ENCODE measurements at regions of chr12 and their contacts with region 1.

Region 1: DNA sequence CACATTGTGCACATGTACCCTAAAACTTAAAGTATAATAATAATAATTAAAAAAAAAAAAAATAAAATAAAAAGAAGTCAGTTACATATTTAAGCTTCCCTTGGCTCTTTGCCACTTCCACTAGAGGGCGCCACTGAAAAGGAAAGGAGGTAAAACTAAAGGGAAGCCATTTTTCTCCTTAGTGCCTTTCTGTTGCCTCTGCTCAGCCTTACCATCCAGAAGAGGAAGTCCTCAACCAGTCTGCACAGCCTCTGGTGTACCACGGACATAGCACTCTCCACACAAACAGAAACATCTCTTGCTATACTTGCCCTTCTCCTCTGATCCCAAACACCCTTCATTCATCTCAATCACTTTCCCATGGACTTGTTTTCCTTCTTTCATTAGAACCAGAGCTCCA is 169.0 kb upstream of the EEA1 start:
- DNase-seq: peak; percentile 82
- ATAC-seq: peak; percentile 84
- H3K4me3 Mint-ChIP-seq: no peak overlapping the region
- H3K27ac Mint-ChIP-seq: peak overlapping the region; percentile 31
- H3K4me1 Mint-ChIP-seq: peaks cover 17% of the 10 kb centered on the region
- H3K27me3 Mint-ChIP-seq: no peaks in the 10 kb centered on the region

Region 2: DNA sequence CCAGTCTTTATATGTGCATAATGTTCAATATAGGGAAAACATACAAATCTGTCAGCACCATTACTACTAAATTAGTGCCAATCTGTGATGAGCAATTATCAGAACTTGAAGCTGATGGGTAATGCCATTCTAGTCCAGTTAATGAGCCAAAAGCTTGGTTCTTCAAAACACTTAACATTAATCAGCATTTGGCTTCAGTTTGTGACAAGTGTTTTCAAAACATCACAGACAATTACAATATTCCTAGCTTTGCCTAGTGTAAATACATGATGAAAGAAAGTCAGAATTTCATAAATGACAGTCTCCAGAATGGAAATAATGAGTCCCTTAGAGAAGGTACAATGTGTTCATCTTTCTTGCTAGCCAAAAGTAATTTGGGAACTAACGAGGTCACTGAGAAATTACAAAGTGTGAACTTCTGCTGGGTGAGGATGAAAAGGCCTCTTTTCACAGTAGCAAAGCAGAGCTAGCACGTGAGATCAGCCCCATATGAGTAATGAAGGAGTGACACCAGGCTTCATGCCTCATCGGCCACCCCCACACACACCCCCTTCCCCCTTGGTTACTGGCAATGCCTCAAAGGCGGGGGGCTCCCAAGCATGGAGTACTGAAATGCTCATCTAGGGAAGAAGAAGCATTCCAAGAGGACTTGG is 11.6 kb after region 1 on chr12:
- CTCF ChIA-PET with region 1: interaction called, 14 read pairs
- POLR2A ChIA-PET with region 1: no interaction called
- DNase-seq: no peak
- ATAC-seq: no peak
- H3K4me3 Mint-ChIP-seq: no peak overlapping the region
- H3K27ac Mint-ChIP-seq: no peak overlapping the region
- H3K4me1 Mint-ChIP-seq: no peaks in the 10 kb centered on the region
- H3K27me3 Mint-ChIP-seq: peaks cover 3% of the 10 kb centered on the region

Region 3: GRCh38 chr12:93121729-93122488 is 23.8 kb after region 1 on chr12:
- CTCF ChIA-PET with region 1: interaction called, 10 read pairs
- POLR2A ChIA-PET with region 1: no interaction called
- DNase-seq: no peak
- ATAC-seq: no peak
- H3K4me3 Mint-ChIP-seq: no peak overlapping the region
- H3K27ac Mint-ChIP-seq: no peak overlapping the region
- H3K4me1 Mint-ChIP-seq: no peaks in the 10 kb centered on the region
- H3K27me3 Mint-ChIP-seq: peaks cover 7% of the 10 kb centered on the region

Region 4: GRCh38 chr12:93223440-93224426 is 125.7 kb after region 1 on chr12:
- CTCF ChIA-PET with region 1: no interaction called
- POLR2A ChIA-PET with region 1: no interaction called
- DNase-seq: no peak
- ATAC-seq: no peak
- H3K4me3 Mint-ChIP-seq: no peak overlapping the region
- H3K27ac Mint-ChIP-seq: no peak overlapping the region
- H3K4me1 Mint-ChIP-seq: no peaks in the 10 kb centered on the region
- H3K27me3 Mint-ChIP-seq: peaks cover 2% of the 10 kb centered on the region

Region 5: DNA sequence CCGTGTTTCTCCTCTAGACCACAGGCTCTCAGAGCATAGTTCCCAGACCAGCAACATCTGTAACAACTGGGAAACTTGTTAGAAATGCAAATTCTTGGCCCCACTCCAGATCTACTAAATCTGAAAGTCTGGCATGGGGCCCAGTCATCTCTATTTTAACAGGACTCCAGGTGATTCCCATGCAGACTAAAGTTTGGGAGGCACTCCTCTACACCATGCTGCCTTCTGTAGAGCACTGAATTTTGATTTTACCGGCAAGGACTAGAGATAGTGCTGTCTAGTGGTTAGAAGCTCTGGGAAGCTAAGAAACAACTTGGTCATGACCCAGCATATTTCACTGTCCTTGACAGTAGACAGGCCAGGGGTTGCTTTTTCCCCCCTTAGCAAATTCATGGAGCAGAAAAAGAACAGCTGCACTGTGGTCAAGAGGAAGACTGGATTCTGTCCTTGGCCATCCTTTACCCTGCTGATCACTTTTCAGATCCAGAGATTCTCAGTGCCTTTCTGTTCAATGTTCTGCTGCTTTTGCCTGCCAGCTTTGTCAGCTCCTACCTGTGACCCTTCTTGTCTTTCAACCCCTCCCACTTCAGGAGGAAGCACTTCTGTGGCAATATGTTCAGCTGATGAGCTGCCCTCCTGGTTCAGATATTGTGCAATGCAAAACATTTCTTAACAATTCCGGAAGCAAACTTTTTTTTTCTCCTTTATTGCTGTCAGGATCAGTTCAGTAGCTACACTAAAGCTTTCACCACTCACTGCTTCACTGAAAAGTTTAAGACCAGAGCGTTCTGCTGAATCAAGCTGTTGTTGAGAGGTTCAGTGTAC is 145.8 kb after region 1 on chr12:
- CTCF ChIA-PET with region 1: interaction called, 18 read pairs
- POLR2A ChIA-PET with region 1: no interaction called
- DNase-seq: peak; percentile 49
- ATAC-seq: peak; percentile 16
- H3K4me3 Mint-ChIP-seq: peak overlapping the region; percentile 51
- H3K27ac Mint-ChIP-seq: peak overlapping the region; percentile 81
- H3K4me1 Mint-ChIP-seq: peaks cover 52% of the 10 kb centered on the region
- H3K27me3 Mint-ChIP-seq: no peaks in the 10 kb centered on the region

Region 6: GRCh38 chr12:93378373-93379325 is 280.6 kb after region 1 on chr12:
- CTCF ChIA-PET with region 1: interaction called, 54 read pairs
- POLR2A ChIA-PET with region 1: no interaction called
- DNase-seq: peak; percentile 73
- ATAC-seq: peak; percentile 59
- H3K4me3 Mint-ChIP-seq: peak overlapping the region; percentile 99
- H3K27ac Mint-ChIP-seq: peak overlapping the region; percentile 99
- H3K4me1 Mint-ChIP-seq: peaks cover 43% of the 10 kb centered on the region
- H3K27me3 Mint-ChIP-seq: no peaks in the 10 kb centered on the region

Region 7: GRCh38 chr12:93397412-93397811 is 299.3 kb after region 1 on chr12:
- CTCF ChIA-PET with region 1: interaction called, 22 read pairs
- POLR2A ChIA-PET with region 1: no interaction called
- DNase-seq: no peak
- ATAC-seq: no peak
- H3K4me3 Mint-ChIP-seq: no peak overlapping the region
- H3K27ac Mint-ChIP-seq: no peak overlapping the region
- H3K4me1 Mint-ChIP-seq: no peaks in the 10 kb centered on the region
- H3K27me3 Mint-ChIP-seq: no peaks in the 10 kb centered on the region